Left lung (tissue), 14 donors: ENCODE measurements at regions of chr11 and their contacts with region 1.

Region 1: DNA sequence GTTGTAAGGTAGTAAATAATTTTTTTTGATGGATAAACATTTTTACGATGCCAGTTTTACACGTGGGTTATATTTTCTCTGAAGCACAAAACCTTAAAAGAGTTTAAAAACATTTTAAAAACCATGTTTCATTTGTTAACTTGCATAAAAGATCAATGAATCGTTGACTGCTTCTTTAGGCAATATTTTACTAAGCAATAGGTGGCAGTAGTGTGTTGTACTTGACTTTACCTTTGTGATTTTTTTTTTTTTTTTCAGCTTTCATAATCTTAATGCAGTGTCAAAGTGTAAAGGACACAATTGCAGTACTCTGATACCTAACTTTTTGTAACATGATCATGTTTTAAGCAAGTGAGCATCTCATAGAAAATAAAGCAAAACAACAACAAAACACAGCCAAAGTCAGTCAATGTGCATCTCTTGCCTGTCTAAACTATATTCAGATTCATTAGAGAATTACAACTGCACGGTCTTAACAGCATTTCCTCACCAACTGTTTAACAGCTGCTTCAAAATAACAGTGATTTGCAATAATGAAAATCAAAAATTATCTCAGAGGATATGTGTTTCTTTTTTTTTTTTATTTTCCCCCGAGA is 27.7 kb downstream of the DNAJC24 start:
- DNase-seq: peak in 2 of 4 donors; percentile 13 to 16
- ATAC-seq: peak; percentile 41
- H3K4me3 ChIP-seq: no peak overlapping the region
- H3K27ac ChIP-seq: no peak overlapping the region
- H3K4me1 ChIP-seq: peaks cover 0 to 3% of the 10 kb centered on the region in 2 donors
- H3K27me3 ChIP-seq: no peaks in the 10 kb centered on the region
- CTCF ChIP-seq: peak; percentile 34 to 37

Region 2: GRCh38 chr11:31870609-31871309 is 473.4 kb after region 1 on chr11:
- intact Hi-C with region 1: loop called in 1 of 2 experiments (anchors 10 kb)
- DNase-seq: peak in 2 of 4 donors; percentile 31 to 61
- ATAC-seq: peak; percentile 86
- H3K4me3 ChIP-seq: no peak overlapping the region
- H3K27ac ChIP-seq: no peak overlapping the region
- H3K4me1 ChIP-seq: no peaks in the 10 kb centered on the region
- H3K27me3 ChIP-seq: peaks cover 0 to 64% of the 10 kb centered on the region in 2 donors
- CTCF ChIP-seq: peak; percentile 49 to 53